ENCODE measurements at regions of chr11 and their contacts with region 1.

Region 1: DNA sequence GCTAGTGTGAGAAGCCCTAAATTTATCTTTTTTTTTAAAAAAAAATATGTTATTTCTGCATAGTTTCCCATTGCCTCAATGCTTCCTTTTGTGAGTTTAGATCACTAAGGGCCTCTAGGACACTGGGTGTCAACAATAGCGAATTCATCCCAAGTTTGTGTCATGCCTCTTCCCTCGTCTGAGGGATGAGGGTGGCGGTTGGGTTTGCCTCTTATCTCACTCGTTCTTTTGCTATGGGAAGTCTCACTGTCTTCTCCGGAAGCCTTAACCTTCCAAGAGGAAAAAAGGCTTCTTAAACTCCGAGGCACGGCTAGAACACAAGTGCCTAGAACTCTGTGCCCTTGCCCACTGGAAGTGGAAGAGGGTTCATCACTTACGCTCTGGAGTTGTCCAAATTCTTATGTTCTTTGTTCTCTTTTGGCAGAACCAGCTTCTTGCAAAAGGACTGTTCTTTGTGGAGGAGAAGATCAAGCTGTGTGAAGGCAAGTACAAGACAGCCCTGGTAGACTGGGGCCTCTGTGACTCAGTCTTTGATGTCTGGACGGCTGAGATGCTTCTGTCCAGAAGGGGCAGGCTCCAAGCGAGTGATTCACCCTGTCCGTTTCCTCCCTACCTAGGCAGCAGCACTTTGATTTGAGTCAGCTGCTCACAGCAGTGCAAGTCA is 78.5 kb downstream of the TRAF6 start:
- DNase-seq: peak; percentile 39
- ATAC-seq: peak; percentile 97
- H3K4me3 ChIP-seq: no peak overlapping the region
- H3K27ac ChIP-seq: no peak overlapping the region
- H3K4me1 ChIP-seq: peaks cover 24% of the 10 kb centered on the region
- H3K27me3 ChIP-seq: peaks cover 0 to 1% of the 10 kb centered on the region in 2 experiments; a peak in 3 of 5 replicates
- CTCF ChIP-seq: no peak
- EP300 ChIP-seq: no peak
- POLR2A ChIP-seq: no peak
- RAD21 ChIP-seq: no peak

Region 2: GRCh38 chr11:36398231-36398953 is 33.2 kb before region 1 on chr11:
- CTCF ChIA-PET with region 1: no interaction called
- POLR2A ChIA-PET with region 1: no interaction called
- in situ Hi-C with region 1: no loop called
- intact Hi-C with region 1: no loop called
- DNase-seq: no peak
- ATAC-seq: no peak
- H3K4me3 ChIP-seq: no peak overlapping the region
- H3K27ac ChIP-seq: no peak overlapping the region
- H3K4me1 ChIP-seq: no peaks in the 10 kb centered on the region
- H3K27me3 ChIP-seq: peaks cover 0 to 4% of the 10 kb centered on the region in 2 experiments; a peak in 1 of 5 replicates
- CTCF ChIP-seq: no peak
- EP300 ChIP-seq: no peak
- POLR2A ChIP-seq: no peak
- RAD21 ChIP-seq: no peak

Region 3: DNA sequence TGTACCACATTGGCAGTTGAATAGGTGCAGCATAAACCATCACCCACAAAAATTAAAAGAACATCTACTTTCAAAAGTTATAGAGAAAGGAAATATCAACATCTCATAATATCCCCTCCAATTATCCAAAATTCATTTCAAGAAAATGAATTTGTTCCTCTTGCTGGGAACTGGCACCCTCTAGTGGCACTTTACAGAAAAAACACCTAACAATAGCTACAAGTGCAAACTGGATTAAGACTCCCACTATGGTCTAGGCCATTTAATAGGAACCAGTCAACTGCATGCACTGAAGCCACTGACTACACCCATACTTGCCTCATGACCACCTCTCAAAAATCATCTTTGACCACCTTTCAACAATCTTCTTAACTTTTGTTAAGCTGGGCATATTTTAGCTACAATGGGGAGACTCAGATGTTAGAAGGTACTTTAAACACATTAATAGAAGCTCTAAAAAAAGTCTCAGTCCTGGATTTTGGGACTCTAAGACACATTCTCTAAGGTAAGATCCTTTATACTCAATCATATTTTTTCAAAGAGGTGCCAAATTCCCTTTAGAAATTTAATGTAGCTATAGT is 61.3 kb after region 1 on chr11:
- CTCF ChIA-PET with region 1: no interaction called
- POLR2A ChIA-PET with region 1: no interaction called
- in situ Hi-C with region 1: loop called (anchors 10 kb)
- intact Hi-C with region 1: no loop called
- DNase-seq: peak; percentile 35
- ATAC-seq: peak; percentile 66; the same call in 2 of the 3 replicates
- H3K4me3 ChIP-seq: no peak overlapping the region
- H3K27ac ChIP-seq: no peak overlapping the region
- H3K4me1 ChIP-seq: no peaks in the 10 kb centered on the region
- H3K27me3 ChIP-seq: no peaks in the 10 kb centered on the region
- CTCF ChIP-seq: peak; percentile 71
- EP300 ChIP-seq: no peak
- POLR2A ChIP-seq: no peak
- RAD21 ChIP-seq: no peak